Mammary epithelial cell (primary cell): ENCODE measurements at regions of chrX and their contacts with region 1.

Region 1: GRCh38 chrX:10014462-10015356 is 47.6 kb downstream of the CLDN34 start:
- DNase-seq: peak; percentile 77
- H3K4me3 ChIP-seq: peak overlapping the region; percentile 38 to 58 (median 52)
- H3K27ac ChIP-seq: peak overlapping the region; percentile 3
- H3K4me1 ChIP-seq: peaks cover 16% of the 10 kb centered on the region
- H3K27me3 ChIP-seq: peaks cover 3% of the 10 kb centered on the region
- CTCF ChIP-seq: no peak

Region 2: GRCh38 chrX:10052906-10053625 is 38.4 kb after region 1 on chrX:
- CTCF ChIA-PET with region 1: no interaction called
- dilution Hi-C with region 1: no loop called
- in situ Hi-C with region 1: no loop called
- intact Hi-C with region 1: loop called (anchors 5 kb)
- DNase-seq: no peak
- H3K4me3 ChIP-seq: no peak overlapping the region
- H3K27ac ChIP-seq: no peak overlapping the region
- H3K4me1 ChIP-seq: peaks cover 52% of the 10 kb centered on the region
- H3K27me3 ChIP-seq: no peaks in the 10 kb centered on the region
- CTCF ChIP-seq: no peak

Region 3: GRCh38 chrX:10071451-10072144 is 56.9 kb after region 1 on chrX:
- CTCF ChIA-PET with region 1: no interaction called
- dilution Hi-C with region 1: no loop called
- in situ Hi-C with region 1: no loop called
- intact Hi-C with region 1: loop called (anchors 5 kb)
- DNase-seq: no peak
- H3K4me3 ChIP-seq: no peak overlapping the region
- H3K27ac ChIP-seq: no peak overlapping the region
- H3K4me1 ChIP-seq: peaks cover 19% of the 10 kb centered on the region
- H3K27me3 ChIP-seq: no peaks in the 10 kb centered on the region
- CTCF ChIP-seq: no peak